H1 (cell line): ENCODE measurements at regions of chr18 and their contacts with region 1.

Region 1: GRCh38 chr18:30889519-30890301 is 152.8 kb downstream of the DSC3 start:
- DNase-seq: no peak
- H3K4me3 ChIP-seq: no peak overlapping the region
- H3K27ac ChIP-seq: no peak overlapping the region
- H3K4me1 ChIP-seq: 0 out of 7 replicates have a peak, but pooled peaks cover 0 to 2% (median 0%) of the 10 kb centered on the region in 4 experiments
- H3K27me3 ChIP-seq: no peaks in the 10 kb centered on the region
- CTCF ChIP-seq: peak in 2 of 3 experiments; percentile 66 to 80; a peak in 3 of 4 replicates
- EP300 ChIP-seq: no peak
- POLR2A ChIP-seq: no peak
- RAD21 ChIP-seq: peak; percentile 95 to 97

Region 2: DNA sequence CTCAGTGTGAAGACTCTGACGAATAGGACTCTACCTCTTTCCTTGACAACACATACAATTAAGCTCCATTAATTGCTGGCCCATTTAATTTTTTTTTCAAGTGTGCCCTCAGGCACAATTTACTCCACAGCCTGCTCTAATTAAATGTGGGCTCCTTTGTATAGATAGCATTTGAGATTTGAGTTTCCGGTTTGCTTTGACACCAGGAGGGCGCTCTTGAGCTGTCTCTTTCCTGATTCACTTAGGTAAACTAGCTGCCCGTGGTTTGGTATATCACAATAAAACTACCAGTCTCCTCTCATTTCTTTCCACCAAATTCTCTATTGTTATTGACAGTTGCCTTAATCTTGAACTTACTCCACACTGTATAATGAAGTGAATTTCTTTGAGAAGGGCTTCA is 513.2 kb before region 1 on chr18:
- CTCF ChIA-PET with region 1: interaction called, 11 read pairs
- POLR2A ChIA-PET with region 1: no interaction called
- DNase-seq: no peak
- H3K4me3 ChIP-seq: no peak overlapping the region
- H3K27ac ChIP-seq: no peak overlapping the region
- H3K4me1 ChIP-seq: peaks cover 0 to 2% (median 0%) of the 10 kb centered on the region in 4 experiments; a peak in 1 of 7 replicates
- H3K27me3 ChIP-seq: no peaks in the 10 kb centered on the region
- CTCF ChIP-seq: peak in 2 of 3 experiments; percentile 59 to 68; a peak in 3 of 4 replicates
- EP300 ChIP-seq: no peak
- POLR2A ChIP-seq: no peak
- RAD21 ChIP-seq: peak; percentile 80 to 81